ENCODE measurements at regions of chr3 and their contacts with region 1.

Region 1: DNA sequence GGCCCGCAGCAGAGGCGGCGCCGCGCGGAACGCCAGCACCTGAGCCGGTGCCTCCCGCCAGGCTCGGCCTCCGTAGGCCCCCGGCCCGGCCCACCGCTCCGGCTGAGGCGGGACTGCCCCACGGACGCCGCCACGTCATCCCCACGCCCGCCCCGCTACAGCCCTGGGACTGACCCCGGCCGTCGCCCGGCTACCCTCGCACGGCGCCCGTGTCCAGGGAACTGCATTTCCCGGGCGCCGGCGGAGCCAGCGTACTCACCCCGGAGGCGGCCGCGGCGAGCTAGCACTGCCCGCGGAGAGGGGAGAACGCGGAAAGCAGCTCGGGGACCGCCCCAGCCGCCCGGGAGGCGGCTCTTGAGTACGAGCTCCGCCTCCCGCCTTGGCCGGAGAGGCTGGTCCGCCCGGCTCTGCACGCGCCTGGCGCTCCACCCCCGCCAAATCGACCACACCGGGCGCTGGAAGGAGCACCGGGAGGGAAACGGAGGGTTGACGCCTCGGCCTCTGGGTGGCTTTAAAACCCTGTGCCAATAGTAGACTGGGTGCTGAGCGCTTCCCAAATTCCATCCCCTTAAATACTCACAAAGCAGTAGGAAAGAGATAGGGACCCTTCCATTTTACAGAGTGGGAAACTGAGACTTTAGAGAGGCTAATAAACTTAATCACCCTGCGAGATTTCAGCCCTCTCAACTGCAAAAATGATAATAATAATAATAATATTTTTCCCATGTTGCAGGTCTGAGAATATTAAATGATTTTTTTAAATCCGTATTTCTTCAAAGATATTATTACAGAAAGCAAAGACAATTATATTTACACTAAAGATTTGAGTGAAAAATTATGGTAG is at the start of gene B4GALT4:
- DNase-seq: peak; percentile 67 to 90
- ATAC-seq: peak; percentile 94 to 95
- H3K4me3 ChIP-seq: peak within 1 kb of the TSS; percentile 80
- H3K27ac ChIP-seq: peak within 1 kb of the TSS; percentile 92 to 99
- H3K4me1 ChIP-seq: peaks cover 33% of the 10 kb centered on the region
- CTCF ChIP-seq: no peak
- EP300 ChIP-seq: no peak; a peak in 1 of 5 replicates
- POLR2A ChIP-seq: peak; percentile 80
- RAD21 ChIP-seq: peak in 1 of 2 experiments; percentile 10; a peak in 1 of 5 replicates
- polyA plus RNA-seq, gene B4GALT4: 134 and 193 TPM in 2 replicates

Region 2: GRCh38 chr3:119145500-119146191 is 95.2 kb before region 1 on chr3 and contains the start of gene TEX55:
- CTCF ChIA-PET with region 1: interaction called, 60 read pairs
- POLR2A ChIA-PET with region 1: interaction called, 5 read pairs
- DNase-seq: peak; percentile 54 to 77
- ATAC-seq: peak; percentile 86 to 90
- H3K4me3 ChIP-seq: no peak within 1 kb of the TSS
- H3K27ac ChIP-seq: peak within 1 kb of the TSS; percentile 63 to 75
- H3K4me1 ChIP-seq: peaks cover 33% of the 10 kb centered on the region
- CTCF ChIP-seq: peak; percentile 63
- EP300 ChIP-seq: no peak
- POLR2A ChIP-seq: no peak
- RAD21 ChIP-seq: peak; percentile 78 to 82
- polyA plus RNA-seq, gene TEX55: 0.08 TPM in 1 of 2 replicates, not detected in the other

Region 3: DNA sequence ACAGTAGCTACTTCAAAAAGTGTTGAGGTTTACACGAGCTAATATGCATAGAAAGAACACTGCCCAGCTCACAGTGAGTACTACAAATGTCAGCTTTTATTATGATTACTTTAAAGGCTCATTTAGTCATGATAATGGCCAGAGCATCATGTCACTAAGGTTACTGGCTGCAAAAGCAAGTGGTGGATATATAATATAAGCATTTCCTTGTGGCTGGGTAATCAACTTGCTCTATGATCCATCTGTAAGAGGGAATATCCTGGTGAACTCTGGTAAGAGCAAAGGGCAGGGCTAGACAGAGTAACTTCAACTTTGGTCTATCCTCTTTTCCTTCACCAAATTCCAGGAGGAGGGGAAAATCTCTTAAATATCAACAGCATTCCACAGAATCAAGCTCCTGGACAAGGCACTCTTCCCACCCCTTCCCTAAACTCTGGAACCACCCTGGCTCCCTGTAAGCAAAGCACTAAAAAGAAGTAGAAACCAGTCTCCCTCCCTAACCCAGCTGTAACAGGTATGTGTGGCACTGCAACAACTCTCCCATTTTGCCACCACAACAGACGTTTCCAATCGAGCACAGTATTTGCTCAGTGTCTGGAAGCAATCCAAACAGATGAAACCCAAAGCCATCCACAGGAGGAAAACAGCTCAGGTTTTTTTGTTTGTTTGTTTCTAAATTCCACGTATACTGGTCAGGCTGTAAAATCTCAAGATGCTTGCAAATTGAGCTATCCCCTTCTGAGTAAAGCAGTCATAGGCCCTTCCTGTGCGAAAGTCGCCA is 13.6 kb before region 1 on chr3:
- CTCF ChIA-PET with region 1: interaction called, 47 read pairs
- POLR2A ChIA-PET with region 1: interaction called, 13 read pairs
- DNase-seq: no peak
- ATAC-seq: peak; percentile 18 to 43; a peak in 3 of 6 replicates
- H3K4me3 ChIP-seq: no peak overlapping the region
- H3K27ac ChIP-seq: peak overlapping the region; percentile 38 to 66; a peak in 4 of 6 replicates
- H3K4me1 ChIP-seq: peaks cover 68% of the 10 kb centered on the region
- CTCF ChIP-seq: no peak
- EP300 ChIP-seq: no peak
- POLR2A ChIP-seq: no peak
- RAD21 ChIP-seq: no peak

Region 4: GRCh38 chr3:119333773-119334509 is 93.1 kb after region 1 on chr3:
- CTCF ChIA-PET with region 1: no interaction called
- POLR2A ChIA-PET with region 1: no interaction called
- DNase-seq: no peak
- ATAC-seq: no peak
- H3K4me3 ChIP-seq: no peak overlapping the region
- H3K27ac ChIP-seq: no peak overlapping the region
- H3K4me1 ChIP-seq: no peaks in the 10 kb centered on the region
- CTCF ChIP-seq: no peak
- EP300 ChIP-seq: no peak
- POLR2A ChIP-seq: no peak
- RAD21 ChIP-seq: no peak

Region 5: DNA sequence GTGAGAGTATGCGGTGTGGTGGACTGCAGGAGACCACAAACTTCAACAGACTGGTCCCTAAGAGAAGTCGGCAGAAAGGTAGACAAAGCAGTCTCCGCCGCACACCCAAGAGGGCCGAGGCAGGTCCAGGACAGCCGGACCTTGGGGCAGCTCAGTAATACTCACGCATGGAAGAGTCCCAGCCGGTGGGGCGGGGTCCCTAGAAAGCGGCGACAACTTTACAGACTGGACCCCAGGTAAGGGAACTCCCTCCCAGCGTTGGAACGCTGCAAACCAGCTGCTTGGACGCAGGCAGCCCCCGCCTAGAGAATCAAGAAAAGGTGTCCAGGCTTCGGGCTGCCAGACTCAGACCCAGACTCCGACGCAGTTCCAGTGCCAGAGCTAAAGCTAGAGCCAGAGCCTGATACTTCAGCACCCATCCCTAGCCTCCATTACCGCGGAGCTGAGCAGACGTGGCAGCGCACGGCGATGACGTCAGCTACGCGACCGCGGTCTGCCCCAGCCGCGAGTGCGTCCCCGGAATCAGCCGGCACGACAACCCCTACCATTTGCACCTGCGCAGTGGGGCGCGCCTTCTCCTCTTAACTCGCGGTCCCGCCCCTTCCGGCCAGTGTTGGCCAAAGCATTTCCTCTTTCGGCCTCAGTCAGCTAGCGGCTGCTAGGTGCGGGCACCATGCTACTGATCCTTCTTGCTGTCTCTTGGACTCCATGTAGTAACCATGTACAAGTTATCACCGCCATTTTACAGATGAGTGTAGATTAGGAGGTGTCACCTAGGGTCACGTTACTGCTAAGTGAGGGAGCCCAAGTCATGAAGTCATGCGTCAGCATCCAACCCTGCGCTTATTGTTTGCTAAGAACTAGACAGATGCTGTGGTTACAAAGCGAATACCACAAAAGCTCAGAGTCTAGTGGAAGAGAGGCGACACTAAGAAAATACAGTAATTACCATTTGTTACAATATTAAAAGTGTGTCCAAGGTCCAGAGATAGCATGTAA is 222.7 kb after region 1 on chr3 and contains the start of gene TMEM39A:
- CTCF ChIA-PET with region 1: interaction called, 3 read pairs
- POLR2A ChIA-PET with region 1: interaction called, 13 read pairs
- DNase-seq: peak; percentile 98
- ATAC-seq: peak; percentile 97 to 98
- H3K4me3 ChIP-seq: peak within 1 kb of the TSS; percentile 88
- H3K27ac ChIP-seq: peak within 1 kb of the TSS; percentile 86 to 88
- H3K4me1 ChIP-seq: peaks cover 19% of the 10 kb centered on the region
- CTCF ChIP-seq: no peak
- EP300 ChIP-seq: no peak
- POLR2A ChIP-seq: peak; percentile 94
- RAD21 ChIP-seq: no peak
- polyA plus RNA-seq, gene TMEM39A: 21.9 and 38.9 TPM in 2 replicates

Measured in A549 (cell line).